H1 (cell line): ENCODE measurements at regions of chr15 and their contacts with region 1.

Region 1: GRCh38 chr15:75201609-75202250 is at the start of gene C15orf39:
- DNase-seq: peak in 1 of 2 experiments; percentile 89
- H3K4me3 ChIP-seq: peak within 1 kb of the TSS; percentile 70 to 89 (median 82)
- H3K27ac ChIP-seq: peak within 1 kb of the TSS; percentile 79; the same call in 1 of the 2 replicates
- H3K4me1 ChIP-seq: peaks cover 0 to 38% (median 20%) of the 10 kb centered on the region in 4 experiments; a peak in 6 of 7 replicates
- H3K27me3 ChIP-seq: peaks cover 0 to 6% (median 2%) of the 10 kb centered on the region in 4 experiments; a peak in 1 of 7 replicates
- CTCF ChIP-seq: peak in 2 of 3 experiments; percentile 73 to 79; a peak in 3 of 4 replicates
- EP300 ChIP-seq: no peak
- POLR2A ChIP-seq: peak in 1 of 2 experiments; percentile 90; a peak in 2 of 3 replicates
- RAD21 ChIP-seq: peak; percentile 17 to 67; a peak in 3 of 4 replicates
- total RNA-seq, gene C15orf39: 35.6 and 38.5 TPM in 2 replicates

Region 2: GRCh38 chr15:75029378-75030022 is 172.2 kb before region 1 on chr15:
- CTCF ChIA-PET with region 1: interaction called, 97 read pairs
- POLR2A ChIA-PET with region 1: interaction called, 22 read pairs
- DNase-seq: peak; percentile 61 to 98
- H3K4me3 ChIP-seq: no peak overlapping the region
- H3K27ac ChIP-seq: no peak overlapping the region
- H3K4me1 ChIP-seq: peaks cover 0 to 11% (median 9%) of the 10 kb centered on the region in 4 experiments; a peak in 5 of 7 replicates
- H3K27me3 ChIP-seq: no peaks in the 10 kb centered on the region
- CTCF ChIP-seq: peak; percentile 92 to 97 (median 95)
- EP300 ChIP-seq: no peak
- POLR2A ChIP-seq: no peak
- RAD21 ChIP-seq: peak; percentile 98 to 99

Region 3: GRCh38 chr15:75042730-75043508 is 158.8 kb before region 1 on chr15:
- CTCF ChIA-PET with region 1: interaction called, 46 read pairs
- POLR2A ChIA-PET with region 1: interaction called, 9 read pairs
- DNase-seq: peak in 1 of 2 experiments; percentile 73
- H3K4me3 ChIP-seq: no peak overlapping the region
- H3K27ac ChIP-seq: no peak overlapping the region
- H3K4me1 ChIP-seq: peaks cover 0 to 12% (median 8%) of the 10 kb centered on the region in 4 experiments; a peak in 5 of 7 replicates
- H3K27me3 ChIP-seq: no peaks in the 10 kb centered on the region
- CTCF ChIP-seq: peak; percentile 68 to 80 (median 79)
- EP300 ChIP-seq: no peak
- POLR2A ChIP-seq: no peak
- RAD21 ChIP-seq: peak; percentile 76 to 82

Region 4: DNA sequence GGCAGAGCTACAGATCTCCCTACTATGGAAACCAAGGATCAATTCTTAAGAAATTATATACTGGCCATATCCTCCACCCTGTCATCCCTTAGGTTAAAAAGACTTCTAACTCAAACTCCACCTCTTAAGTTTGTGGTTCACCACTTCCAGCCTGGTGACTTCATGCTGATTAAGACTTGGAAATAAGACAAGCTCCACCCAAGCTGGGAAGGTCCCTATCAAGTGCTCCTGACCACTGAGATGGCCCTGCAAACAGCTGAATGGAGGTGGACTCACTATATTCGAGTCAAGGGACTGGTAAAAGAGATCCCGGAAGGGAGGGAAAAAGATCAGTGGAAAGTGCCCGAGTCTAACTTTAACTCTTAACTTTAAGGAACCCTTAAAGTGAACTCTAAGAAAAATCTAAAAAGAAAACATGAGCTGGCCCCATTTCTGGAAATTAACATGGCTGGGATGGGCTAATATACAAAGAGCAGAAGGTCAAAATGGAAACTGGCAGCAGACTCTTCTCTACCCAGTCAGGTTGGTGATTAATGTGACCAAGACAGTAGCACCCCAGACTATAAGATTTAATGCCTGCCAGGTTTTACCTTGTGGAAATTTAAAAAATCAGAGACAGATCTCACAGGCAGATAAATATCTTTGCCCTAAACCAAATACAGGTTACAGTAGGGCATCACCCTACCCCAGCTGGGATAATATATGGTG is 134.5 kb before region 1 on chr15:
- CTCF ChIA-PET with region 1: no interaction called
- POLR2A ChIA-PET with region 1: no interaction called
- DNase-seq: no peak
- H3K4me3 ChIP-seq: no peak overlapping the region
- H3K27ac ChIP-seq: no peak overlapping the region
- H3K4me1 ChIP-seq: no peaks in the 10 kb centered on the region; a peak in 1 of 7 replicates
- H3K27me3 ChIP-seq: no peaks in the 10 kb centered on the region; a peak in 1 of 7 replicates
- CTCF ChIP-seq: no peak
- EP300 ChIP-seq: no peak
- POLR2A ChIP-seq: no peak
- RAD21 ChIP-seq: no peak

Region 5: GRCh38 chr15:75178171-75179075 is 23.3 kb before region 1 on chr15:
- CTCF ChIA-PET with region 1: interaction called, 13 read pairs
- POLR2A ChIA-PET with region 1: interaction called, 8 read pairs
- DNase-seq: peak in 1 of 2 experiments; percentile 72
- H3K4me3 ChIP-seq: peak overlapping the region; percentile 12 to 57 (median 24); a peak in 6 of 8 replicates
- H3K27ac ChIP-seq: no peak overlapping the region
- H3K4me1 ChIP-seq: peaks cover 4 to 25% (median 19%) of the 10 kb centered on the region in 4 experiments
- H3K27me3 ChIP-seq: peaks cover 0 to 16% (median 7%) of the 10 kb centered on the region in 4 experiments; a peak in 4 of 7 replicates
- CTCF ChIP-seq: no peak; a peak in 1 of 4 replicates
- EP300 ChIP-seq: no peak
- POLR2A ChIP-seq: no peak
- RAD21 ChIP-seq: 0 out of 4 replicates have a peak, but pooled peaks of 1 of the 2 experiments have one; percentile 1

Region 6: DNA sequence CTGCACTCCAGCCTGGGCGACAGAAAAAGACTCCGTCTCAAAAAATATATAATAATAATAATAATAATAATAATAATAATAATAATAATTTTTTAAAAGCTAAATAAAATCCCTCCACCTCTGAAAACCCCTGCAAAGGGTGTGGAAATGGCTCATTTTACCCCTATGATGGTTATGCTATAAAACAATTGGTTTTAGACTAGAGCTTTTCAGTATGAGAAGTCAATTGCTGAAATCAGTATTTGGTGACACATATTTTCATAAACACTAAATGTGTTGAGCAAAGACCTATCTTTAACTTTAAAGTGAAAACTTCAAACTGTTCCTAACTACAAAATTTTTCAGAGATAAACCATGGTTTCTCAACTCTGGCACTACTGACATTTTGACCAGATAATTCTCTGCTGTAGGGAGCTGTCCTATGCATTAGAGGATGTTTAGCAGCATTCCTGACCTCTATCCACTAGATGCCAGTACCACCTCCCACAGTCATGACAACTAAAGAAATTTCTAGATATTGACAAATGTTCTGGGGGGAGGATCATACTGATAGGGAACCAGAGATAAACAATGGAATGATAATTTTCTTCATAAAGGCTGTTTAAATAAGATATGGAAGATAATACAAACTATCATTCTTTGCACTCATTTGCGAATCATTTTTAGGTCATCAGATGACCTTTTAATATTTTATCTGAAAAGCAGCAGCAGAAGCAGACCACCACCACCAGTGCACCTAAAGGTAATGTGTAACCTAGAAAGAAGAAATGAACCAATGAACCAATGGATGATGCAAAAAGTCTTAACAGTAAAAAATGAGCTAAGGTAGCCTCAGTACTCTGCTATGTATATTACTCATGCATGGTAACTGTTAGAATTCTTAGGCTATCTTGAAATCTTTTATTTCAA is 363.6 kb after region 1 on chr15:
- CTCF ChIA-PET with region 1: no interaction called
- POLR2A ChIA-PET with region 1: no interaction called
- DNase-seq: no peak
- H3K4me3 ChIP-seq: no peak overlapping the region
- H3K27ac ChIP-seq: no peak overlapping the region
- H3K4me1 ChIP-seq: peaks cover 0 to 2% (median 0%) of the 10 kb centered on the region in 4 experiments; a peak in 2 of 7 replicates
- H3K27me3 ChIP-seq: no peaks in the 10 kb centered on the region
- CTCF ChIP-seq: no peak
- EP300 ChIP-seq: no peak
- POLR2A ChIP-seq: no peak
- RAD21 ChIP-seq: peak in 1 of 2 experiments; percentile 11; a peak in 1 of 4 replicates